Activated CD8-positive, alpha-beta T cell treated with anti-CD3 and anti-CD28 coated beads, Interleukin-2, amount 10 ng/mL, durations not matched to agents 7 days and 5 days (primary cell): ENCODE measurements at regions of chr2 and their contacts with region 1.

Region 1: DNA sequence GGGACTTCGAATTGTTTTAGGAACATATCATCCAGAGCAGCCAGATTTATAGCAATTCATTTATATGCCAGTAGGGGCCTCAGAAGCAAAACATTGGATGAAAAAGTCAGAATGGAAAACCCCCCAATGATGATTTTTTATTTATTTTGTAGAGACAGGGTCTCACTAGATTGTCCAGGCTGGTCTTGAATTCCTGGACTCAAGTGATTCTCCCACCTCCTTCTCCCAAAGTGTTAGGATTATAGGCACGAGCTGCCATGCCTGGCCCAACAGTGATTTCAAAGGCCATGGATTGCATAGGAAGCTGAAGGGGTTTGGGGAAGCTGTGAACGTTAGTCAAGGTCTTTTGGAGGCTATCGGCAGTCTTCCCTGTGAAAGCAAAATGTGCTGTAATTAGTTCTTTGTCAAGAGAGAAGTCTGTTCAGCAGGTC is 21.9 kb upstream of the MCFD2 start:
- DNase-seq: no peak
- ATAC-seq: no peak
- H3K4me3 Mint-ChIP-seq: no peak overlapping the region
- H3K27ac Mint-ChIP-seq: no peak overlapping the region
- H3K4me1 Mint-ChIP-seq: peaks cover 17% of the 10 kb centered on the region
- H3K27me3 Mint-ChIP-seq: no peaks in the 10 kb centered on the region

Region 2: DNA sequence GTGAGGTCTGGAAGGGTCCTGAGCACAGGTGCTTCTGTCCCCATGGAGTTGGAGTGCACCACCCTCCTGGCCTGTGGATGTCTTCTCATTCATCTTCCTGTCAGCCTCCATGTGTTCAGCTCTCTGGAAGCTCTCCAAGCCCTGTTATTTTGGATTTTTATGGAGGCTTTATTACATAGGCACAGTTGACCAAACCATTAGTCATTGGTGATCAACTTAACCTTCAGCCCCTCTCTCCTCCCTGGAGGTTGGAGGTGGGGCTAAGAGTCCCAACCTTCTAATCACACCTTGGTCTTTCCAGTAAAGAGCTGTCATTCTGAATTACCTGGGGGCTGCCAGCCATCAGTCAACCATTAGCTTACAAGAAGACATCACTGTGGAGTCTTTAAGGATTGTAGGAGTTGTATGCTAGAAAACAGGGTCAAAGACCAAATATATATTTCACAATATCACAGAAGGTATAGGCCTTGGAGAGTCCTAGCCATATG is 14.4 kb before region 1 on chr2:
- CTCF ChIA-PET with region 1: interaction called, 16 read pairs
- POLR2A ChIA-PET with region 1: interaction called, 3 read pairs
- DNase-seq: no peak
- ATAC-seq: no peak
- H3K4me3 Mint-ChIP-seq: no peak overlapping the region
- H3K27ac Mint-ChIP-seq: no peak overlapping the region
- H3K4me1 Mint-ChIP-seq: peaks cover 31% of the 10 kb centered on the region
- H3K27me3 Mint-ChIP-seq: no peaks in the 10 kb centered on the region

Region 3: GRCh38 chr2:47152803-47153202 is 215.3 kb after region 1 on chr2:
- CTCF ChIA-PET with region 1: no interaction called
- POLR2A ChIA-PET with region 1: no interaction called
- DNase-seq: no peak
- ATAC-seq: no peak
- H3K4me3 Mint-ChIP-seq: no peak overlapping the region
- H3K27ac Mint-ChIP-seq: no peak overlapping the region
- H3K4me1 Mint-ChIP-seq: peaks cover 23% of the 10 kb centered on the region
- H3K27me3 Mint-ChIP-seq: no peaks in the 10 kb centered on the region